GM12878 (cell line): ENCODE measurements at regions of chr19 and their contacts with region 1.

Region 1: DNA sequence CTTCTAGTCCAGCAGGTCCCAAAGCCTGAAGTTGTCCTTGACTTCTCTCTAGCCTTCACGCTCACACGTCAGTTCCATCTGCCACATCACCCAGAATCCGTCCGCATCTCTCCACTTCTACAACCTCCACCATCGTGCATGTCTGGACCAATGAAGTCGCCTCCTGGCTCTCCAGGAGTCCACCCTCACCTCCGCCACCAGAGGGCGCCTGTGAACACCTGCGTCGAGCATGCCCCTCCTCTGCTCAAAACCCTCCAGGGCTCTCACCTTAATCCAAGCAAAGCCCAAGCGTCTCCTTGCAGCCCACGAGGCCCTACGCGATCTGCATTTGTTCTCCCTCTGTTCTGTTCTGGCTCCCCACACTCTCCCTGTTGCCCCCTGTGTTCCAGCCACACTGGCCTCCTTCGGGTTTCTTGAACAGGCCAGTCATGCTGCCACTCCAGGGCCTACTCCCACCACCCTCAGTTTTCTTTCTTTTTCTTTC is 3.7 kb downstream of the USHBP1 start:
- DNase-seq: no peak
- ATAC-seq: peak; percentile 100
- H3K4me3 ChIP-seq: no peak overlapping the region
- H3K27ac ChIP-seq: no peak overlapping the region
- H3K4me1 ChIP-seq: peaks cover 7% of the 10 kb centered on the region
- H3K27me3 ChIP-seq: no peaks in the 10 kb centered on the region
- CTCF ChIP-seq: peak; percentile 90 to 99 (median 97)
- EP300 ChIP-seq: no peak
- POLR2A ChIP-seq: no peak
- RAD21 ChIP-seq: peak; percentile 67

Region 2: DNA sequence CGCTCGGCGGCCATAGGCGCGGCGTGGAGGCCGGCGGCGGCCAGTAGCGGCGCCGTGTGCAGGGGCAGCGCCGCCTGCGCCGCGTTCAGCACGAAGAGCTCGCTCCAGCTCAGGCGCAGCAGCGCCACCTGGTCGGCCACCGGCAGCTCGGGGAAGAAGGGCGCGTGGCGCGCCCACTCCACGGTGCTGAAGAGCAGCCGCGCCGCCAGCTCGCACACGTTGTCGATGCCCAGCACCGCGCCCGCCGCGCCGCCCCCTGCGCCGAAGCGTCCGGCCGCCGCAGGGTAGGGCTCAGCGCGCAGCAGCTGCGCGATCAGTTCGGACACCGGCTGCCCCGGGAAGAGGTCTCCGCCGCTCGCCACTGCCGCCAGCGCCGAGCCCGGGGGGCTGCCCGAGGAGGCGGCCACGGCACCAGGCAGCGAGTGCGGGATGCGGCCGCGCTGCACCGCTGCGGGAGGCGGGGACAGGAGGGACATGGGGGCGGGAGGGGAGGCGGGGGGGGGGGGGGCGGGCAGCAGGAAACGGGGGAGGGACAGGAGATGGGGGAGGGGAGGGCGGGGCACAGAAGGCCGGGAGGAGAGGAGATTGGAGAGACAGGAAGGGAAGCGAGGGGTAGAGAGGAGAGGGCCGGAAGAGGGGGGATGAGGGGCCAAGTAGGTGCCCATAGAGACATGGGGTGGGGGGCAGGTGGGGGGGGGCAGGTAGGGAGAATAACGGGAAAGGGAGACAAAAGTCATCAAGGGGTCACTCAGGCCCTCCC is 25.1 kb before region 1 on chr19:
- CTCF ChIA-PET with region 1: interaction called, 16 read pairs
- POLR2A ChIA-PET with region 1: interaction called, 5 read pairs
- RAD21 ChIA-PET with region 1: interaction called, 5 read pairs
- SMC1A ChIA-PET with region 1: interaction called, 4 read pairs
- in situ Hi-C with region 1: no loop called
- intact Hi-C with region 1: no loop called
- DNase-seq: no peak
- ATAC-seq: peak; percentile 93
- H3K4me3 ChIP-seq: peak overlapping the region; percentile 89
- H3K27ac ChIP-seq: peak overlapping the region; percentile 50
- H3K4me1 ChIP-seq: 0 out of 2 replicates have a peak, but pooled peaks cover 4% of the 10 kb centered on the region
- H3K27me3 ChIP-seq: no peaks in the 10 kb centered on the region
- CTCF ChIP-seq: peak; percentile 45 to 90 (median 67); a peak in 5 of 6 replicates
- EP300 ChIP-seq: no peak
- POLR2A ChIP-seq: peak; percentile 39
- RAD21 ChIP-seq: peak; percentile 39; the same call in 1 of the 2 replicates

Region 3: GRCh38 chr19:17246681-17247425 is 14.0 kb before region 1 on chr19:
- CTCF ChIA-PET with region 1: interaction called, 17 read pairs
- POLR2A ChIA-PET with region 1: interaction called, 3 read pairs
- RAD21 ChIA-PET with region 1: interaction called, 4 read pairs
- SMC1A ChIA-PET with region 1: interaction called, 3 read pairs
- in situ Hi-C with region 1: no loop called
- intact Hi-C with region 1: no loop called
- DNase-seq: no peak
- ATAC-seq: no peak
- H3K4me3 ChIP-seq: peak overlapping the region; percentile 68; the same call in 1 of the 2 replicates
- H3K27ac ChIP-seq: peak overlapping the region; percentile 42; the same call in 1 of the 2 replicates
- H3K4me1 ChIP-seq: peaks cover 14% of the 10 kb centered on the region
- H3K27me3 ChIP-seq: no peaks in the 10 kb centered on the region
- CTCF ChIP-seq: no peak
- EP300 ChIP-seq: no peak
- POLR2A ChIP-seq: no peak
- RAD21 ChIP-seq: no peak

Region 4: GRCh38 chr19:17282488-17283255 is 21.8 kb after region 1 on chr19:
- CTCF ChIA-PET with region 1: interaction called, 120 read pairs
- POLR2A ChIA-PET with region 1: no interaction called
- RAD21 ChIA-PET with region 1: interaction called, 12 read pairs
- SMC1A ChIA-PET with region 1: interaction called, 43 read pairs
- in situ Hi-C with region 1: no loop called
- intact Hi-C with region 1: loop called (anchors 1 kb)
- DNase-seq: peak; percentile 46
- ATAC-seq: peak; percentile 92
- H3K4me3 ChIP-seq: peak overlapping the region; percentile 85
- H3K27ac ChIP-seq: peak overlapping the region; percentile 68
- H3K4me1 ChIP-seq: peaks cover 9% of the 10 kb centered on the region
- H3K27me3 ChIP-seq: no peaks in the 10 kb centered on the region
- CTCF ChIP-seq: peak; percentile 90 to 96 (median 94); a peak in 5 of 6 replicates
- EP300 ChIP-seq: no peak
- POLR2A ChIP-seq: peak; percentile 58
- RAD21 ChIP-seq: peak; percentile 79